ENCODE measurements at regions of chr1 and their contacts with region 1.

Region 1: GRCh38 chr1:213244664-213245091 is 193.6 kb downstream of the RPS6KC1 start:
- ATAC-seq: peak in 2 of 8 experiments; percentile 32 to 33
- H3K4me3 ChIP-seq: no peak overlapping the region
- H3K27ac ChIP-seq: no peak overlapping the region
- H3K4me1 ChIP-seq: peaks cover 2 to 5% of the 10 kb centered on the region in 2 donors

Region 2: DNA sequence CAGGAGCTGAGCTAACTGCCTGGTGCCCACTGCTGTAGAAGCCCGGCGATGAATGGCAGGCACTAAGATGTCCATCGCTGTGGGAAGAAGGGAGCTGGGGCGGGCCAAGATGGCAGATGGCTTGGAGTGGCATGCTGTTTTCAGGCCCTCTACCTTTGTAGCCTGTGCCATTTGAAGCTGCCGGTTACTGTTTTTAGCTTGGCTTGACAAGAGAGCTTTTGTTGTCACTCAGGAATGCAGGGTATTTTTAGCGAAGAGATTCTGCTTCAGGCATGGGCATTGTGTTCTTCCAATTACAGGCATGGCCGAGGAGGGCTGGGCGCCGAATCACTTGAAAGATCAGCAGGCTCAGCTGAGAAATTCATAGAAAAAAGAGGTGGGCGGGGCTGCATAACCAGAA is 155.0 kb after region 1 on chr1:
- in situ Hi-C with region 1: no loop called
- ATAC-seq: peak in 1 of 8 experiments; percentile 57
- H3K4me3 ChIP-seq: no peak overlapping the region
- H3K27ac ChIP-seq: no peak overlapping the region
- H3K4me1 ChIP-seq: no peaks in the 10 kb centered on the region

Region 3: GRCh38 chr1:213761845-213762407 is 517.2 kb after region 1 on chr1:
- in situ Hi-C with region 1: no loop called
- ATAC-seq: peak in 5 of 8 experiments; percentile 68 to 99 (median 97)
- H3K4me3 ChIP-seq: no peak overlapping the region
- H3K27ac ChIP-seq: no peak overlapping the region
- H3K4me1 ChIP-seq: peaks cover 0 to 19% of the 10 kb centered on the region in 2 donors

Region 4: GRCh38 chr1:214123061-214123784 is 878.5 kb after region 1 on chr1:
- in situ Hi-C with region 1: loop called in 2 of 9 experiments (anchors 10 kb)
- ATAC-seq: peak; percentile 84 to 96 (median 90)
- H3K4me3 ChIP-seq: no peak overlapping the region
- H3K27ac ChIP-seq: no peak overlapping the region
- H3K4me1 ChIP-seq: peaks cover 7 to 10% of the 10 kb centered on the region in 2 donors